ENCODE measurements at regions of chr12 and their contacts with region 1.

Region 1: DNA sequence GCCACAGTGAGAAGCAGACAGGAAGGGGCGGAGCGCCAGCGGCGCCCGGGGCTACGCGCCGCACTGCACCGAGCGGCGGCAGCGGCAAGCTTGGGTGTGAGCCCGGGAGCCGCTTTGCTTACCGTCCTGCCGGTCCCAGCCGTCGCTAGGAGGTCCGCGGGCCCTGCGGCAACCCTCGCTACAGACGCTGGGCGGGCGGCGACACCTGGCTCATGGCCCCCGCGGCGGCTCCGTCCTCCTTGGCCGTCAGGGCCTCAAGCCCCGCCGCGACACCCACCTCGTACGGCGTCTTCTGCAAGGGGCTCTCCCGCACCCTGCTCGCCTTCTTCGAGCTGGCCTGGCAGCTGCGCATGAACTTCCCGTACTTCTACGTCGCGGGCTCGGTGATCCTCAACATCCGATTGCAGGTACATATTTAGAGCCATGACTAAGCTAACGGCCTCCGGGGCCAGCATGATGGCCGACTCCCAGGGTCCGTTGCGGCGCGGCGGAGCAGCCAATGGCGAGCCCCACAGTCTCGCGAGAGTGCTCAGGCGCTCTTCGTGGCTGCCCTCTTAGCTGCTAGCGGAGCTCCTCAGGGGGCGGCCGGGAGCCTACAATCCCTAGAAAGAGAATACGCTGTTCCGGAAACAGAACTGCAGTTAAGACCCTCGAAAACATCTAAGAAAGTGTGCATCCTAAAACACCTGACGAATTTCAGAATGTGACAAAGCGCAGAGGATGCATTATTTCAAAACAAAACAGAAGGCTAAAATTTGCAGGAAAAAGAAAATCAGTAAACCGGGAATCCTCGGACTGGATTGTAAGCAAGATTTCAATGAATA is at the start of gene SMIM10L1:
- DNase-seq: peak; percentile 89
- ATAC-seq: peak; percentile 97
- H3K4me3 Mint-ChIP-seq: peak within 1 kb of the TSS; percentile 98
- H3K27ac Mint-ChIP-seq: peak within 1 kb of the TSS; percentile 100
- H3K4me1 Mint-ChIP-seq: peaks cover 33% of the 10 kb centered on the region
- H3K27me3 Mint-ChIP-seq: no peaks in the 10 kb centered on the region
- total RNA-seq, gene SMIM10L1: 10.1 to 10.3 TPM

Region 2: DNA sequence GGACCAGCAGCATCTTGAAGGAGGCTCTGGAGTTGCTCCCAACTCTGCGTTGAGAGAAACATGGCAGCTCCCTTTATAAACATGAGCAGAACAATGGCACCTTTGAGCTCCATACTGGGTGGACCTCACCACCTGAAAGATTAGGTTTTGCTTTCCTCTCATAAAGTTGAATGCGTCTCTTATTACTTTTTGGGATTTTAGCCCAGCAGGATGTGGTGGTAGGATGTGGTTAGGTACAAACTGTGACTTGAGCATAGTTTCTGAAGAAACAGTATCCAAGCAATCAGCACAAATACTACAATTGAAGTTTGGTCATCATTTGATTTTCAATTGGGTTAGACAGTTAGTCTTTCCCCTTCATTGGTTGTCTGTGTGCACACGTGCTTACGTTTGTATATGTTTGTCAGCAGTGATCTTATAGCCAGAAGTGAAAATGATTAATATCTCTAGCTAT is 321.9 kb before region 1 on chr12 and contains the start of gene PRR4:
- POLR2A ChIA-PET with region 1: interaction called, 16 read pairs
- DNase-seq: no peak
- ATAC-seq: peak; percentile 83
- H3K4me3 Mint-ChIP-seq: peak within 1 kb of the TSS; percentile 31
- H3K27ac Mint-ChIP-seq: peak within 1 kb of the TSS; percentile 75
- H3K4me1 Mint-ChIP-seq: peaks cover 38% of the 10 kb centered on the region
- H3K27me3 Mint-ChIP-seq: no peaks in the 10 kb centered on the region
- total RNA-seq, gene PRR4: 1.2 to 1.6 TPM

Region 3: GRCh38 chr12:10982244-10982643 is 189.1 kb before region 1 on chr12:
- POLR2A ChIA-PET with region 1: interaction called, 17 read pairs
- DNase-seq: no peak
- ATAC-seq: peak; percentile 92
- H3K4me3 Mint-ChIP-seq: peak overlapping the region; percentile 20
- H3K27ac Mint-ChIP-seq: no peak overlapping the region
- H3K4me1 Mint-ChIP-seq: peaks cover 14% of the 10 kb centered on the region
- H3K27me3 Mint-ChIP-seq: peaks cover 16% of the 10 kb centered on the region

Region 4: DNA sequence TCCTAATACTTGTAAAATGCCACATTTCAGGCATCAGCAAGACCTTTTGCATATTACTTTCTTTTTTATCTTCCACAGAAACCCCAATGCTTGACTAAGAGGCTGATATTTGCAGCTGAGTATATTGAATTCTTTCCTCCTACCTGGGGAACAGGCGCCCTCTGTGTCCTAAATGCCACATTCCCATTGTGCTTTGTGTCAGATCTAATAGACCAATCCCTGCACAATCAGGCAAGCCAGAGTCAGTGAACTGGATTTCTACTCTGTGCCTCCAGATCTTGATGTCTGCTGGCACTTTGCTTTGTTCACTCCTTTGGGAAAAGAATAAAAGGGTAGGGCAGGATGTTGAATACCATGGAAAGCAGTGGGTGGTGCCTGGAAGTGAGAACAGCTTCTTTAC is 37.8 kb after region 1 on chr12:
- POLR2A ChIA-PET with region 1: no interaction called
- DNase-seq: no peak
- ATAC-seq: no peak
- H3K4me3 Mint-ChIP-seq: no peak overlapping the region
- H3K27ac Mint-ChIP-seq: no peak overlapping the region
- H3K4me1 Mint-ChIP-seq: no peaks in the 10 kb centered on the region
- H3K27me3 Mint-ChIP-seq: no peaks in the 10 kb centered on the region

Region 5: DNA sequence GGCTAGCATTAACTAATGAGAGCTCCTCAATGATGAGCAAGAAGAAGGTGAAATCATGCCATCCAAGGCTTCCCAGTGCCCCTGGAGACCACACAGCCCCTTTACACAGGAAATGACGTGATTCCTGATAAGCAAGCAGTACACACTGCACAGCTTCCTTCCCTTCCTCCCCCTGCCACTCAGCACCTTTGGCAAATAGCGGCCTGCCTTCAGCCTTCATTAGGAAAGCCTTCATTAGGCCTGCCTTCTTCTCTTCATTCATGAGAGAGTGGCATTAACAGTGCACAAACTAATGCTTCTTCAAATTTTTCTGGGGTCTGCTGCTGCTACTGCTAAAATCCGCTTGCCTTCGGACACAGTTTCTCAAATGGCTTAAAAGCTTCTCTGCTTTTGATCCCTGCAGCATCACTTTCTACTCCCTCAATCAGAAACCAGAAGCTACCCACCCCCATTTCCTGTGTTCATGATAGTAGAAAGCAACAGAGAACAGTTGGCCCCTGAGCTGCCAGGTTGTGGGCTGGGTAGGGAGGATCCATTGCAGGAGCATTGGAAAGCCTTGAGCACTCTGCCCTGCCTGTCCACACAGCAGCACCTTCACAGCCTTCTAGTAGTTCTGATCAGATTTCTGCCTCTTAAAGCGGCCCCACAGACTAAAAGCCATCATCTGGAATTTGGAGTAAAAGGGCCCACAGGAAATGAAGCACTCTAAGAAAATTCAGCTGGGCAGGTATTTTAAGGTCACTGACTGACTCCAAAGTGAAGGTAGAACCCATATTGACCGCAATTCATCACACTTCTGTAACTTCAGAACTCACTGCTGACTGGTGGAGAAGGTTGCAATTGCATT is 374.4 kb after region 1 on chr12:
- POLR2A ChIA-PET with region 1: interaction called, 16 read pairs
- DNase-seq: peak; percentile 70
- ATAC-seq: peak; percentile 82
- H3K4me3 Mint-ChIP-seq: peak overlapping the region; percentile 73
- H3K27ac Mint-ChIP-seq: peak overlapping the region; percentile 96
- H3K4me1 Mint-ChIP-seq: peaks cover 44% of the 10 kb centered on the region
- H3K27me3 Mint-ChIP-seq: no peaks in the 10 kb centered on the region

Measured in activated naive CD8-positive, alpha-beta T cell treated with anti-CD3 and anti-CD28 coated beads, Interleukin-2, amount 10 ng/mL, durations not matched to agents 7 days and 5 days (primary cell).